ENCODE measurements at regions of chr4 and their contacts with region 1.

Region 1: DNA sequence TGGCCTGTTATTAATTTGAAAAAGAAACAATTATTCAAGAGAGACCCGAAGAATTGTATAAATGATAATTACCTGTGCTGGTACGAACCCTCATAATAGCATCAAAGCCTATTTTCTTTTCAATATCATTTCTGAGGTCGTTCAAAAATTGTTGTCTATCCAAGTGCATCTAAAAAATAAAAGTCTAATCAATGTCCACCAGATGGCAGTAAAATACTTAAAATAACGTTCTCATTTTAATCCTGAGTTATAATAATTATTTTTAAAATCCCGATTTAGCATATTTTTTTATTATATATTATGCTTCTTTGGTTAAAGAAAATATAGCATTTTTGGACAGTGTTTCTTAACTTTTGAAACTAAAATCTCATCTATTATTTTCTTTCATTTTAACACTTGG is 55.7 kb downstream of the METTL14 start:
- DNase-seq: no peak
- ATAC-seq: no peak
- H3K4me3 ChIP-seq: peak overlapping the region; percentile 29
- H3K27ac ChIP-seq: no peak overlapping the region
- H3K4me1 ChIP-seq: peaks cover 1% of the 10 kb centered on the region
- H3K27me3 ChIP-seq: no peaks in the 10 kb centered on the region

Region 2: GRCh38 chr4:118029224-118029623 is 711.6 kb before region 1 on chr4:
- intact Hi-C with region 1: no loop called
- DNase-seq: no peak
- ATAC-seq: no peak
- H3K4me3 ChIP-seq: no peak overlapping the region
- H3K27ac ChIP-seq: no peak overlapping the region
- H3K4me1 ChIP-seq: no peaks in the 10 kb centered on the region
- H3K27me3 ChIP-seq: peaks cover 6% of the 10 kb centered on the region

Region 3: DNA sequence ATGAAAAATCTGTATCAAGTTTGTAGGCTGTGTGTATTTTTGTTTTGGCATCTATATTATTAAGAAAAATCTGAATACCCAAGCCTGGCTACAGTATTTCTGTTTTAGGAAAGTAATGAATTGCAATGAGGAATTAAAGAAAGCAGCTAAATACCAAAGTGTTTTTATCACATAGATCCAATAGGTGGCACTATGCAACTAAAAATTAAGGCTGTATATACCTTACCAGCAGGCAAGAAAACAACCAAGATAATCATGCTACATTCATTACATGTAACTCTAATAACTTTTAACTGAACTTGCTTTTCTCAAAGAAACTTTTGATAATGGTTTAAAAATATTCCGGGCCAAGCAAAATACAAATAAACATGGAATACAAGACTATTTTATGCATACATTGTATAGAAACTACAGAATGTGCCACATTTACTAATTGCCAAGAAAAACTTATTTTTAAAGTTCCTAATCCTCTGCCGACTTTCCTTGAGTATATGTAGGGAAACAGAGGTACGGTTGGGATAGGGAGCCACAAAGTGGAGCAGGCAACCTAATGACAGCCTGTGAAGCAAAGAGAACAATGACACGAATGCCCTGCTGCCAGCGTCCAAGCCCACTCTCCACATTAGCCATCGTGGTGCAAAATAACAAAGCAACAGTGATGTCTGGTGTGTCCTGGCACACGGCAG is 31.4 kb after region 1 on chr4:
- intact Hi-C with region 1: loop called in 1 of 4 experiments (anchors 2 kb)
- DNase-seq: no peak
- ATAC-seq: peak; percentile 81 to 82
- H3K4me3 ChIP-seq: no peak overlapping the region
- H3K27ac ChIP-seq: peak overlapping the region; percentile 39
- H3K4me1 ChIP-seq: peaks cover 6% of the 10 kb centered on the region
- H3K27me3 ChIP-seq: no peaks in the 10 kb centered on the region

Region 4: GRCh38 chr4:118898684-118899138 is 157.8 kb after region 1 on chr4:
- intact Hi-C with region 1: loop called in 1 of 4 experiments (anchors 10 kb)
- DNase-seq: peak; percentile 34 to 82 (median 81)
- ATAC-seq: peak; percentile 91 to 93
- H3K4me3 ChIP-seq: no peak overlapping the region
- H3K27ac ChIP-seq: peak overlapping the region; percentile 83
- H3K4me1 ChIP-seq: peaks cover 3% of the 10 kb centered on the region
- H3K27me3 ChIP-seq: no peaks in the 10 kb centered on the region

Region 5: GRCh38 chr4:118968005-118968404 is 227.1 kb after region 1 on chr4:
- intact Hi-C with region 1: loop called in 3 of 4 experiments (anchors 2 to 10 kb)
- DNase-seq: peak; percentile 41 to 72 (median 47)
- ATAC-seq: peak; percentile 85 to 90
- H3K4me3 ChIP-seq: no peak overlapping the region
- H3K27ac ChIP-seq: peak overlapping the region; percentile 80
- H3K4me1 ChIP-seq: peaks cover 8% of the 10 kb centered on the region
- H3K27me3 ChIP-seq: no peaks in the 10 kb centered on the region

Region 6: GRCh38 chr4:118974758-118975157 is 233.9 kb after region 1 on chr4:
- intact Hi-C with region 1: loop called in 3 of 4 experiments (anchors 2 to 10 kb)
- DNase-seq: no peak
- ATAC-seq: no peak
- H3K4me3 ChIP-seq: no peak overlapping the region
- H3K27ac ChIP-seq: no peak overlapping the region
- H3K4me1 ChIP-seq: peaks cover 1% of the 10 kb centered on the region
- H3K27me3 ChIP-seq: no peaks in the 10 kb centered on the region